Esophagus muscularis mucosa (tissue), 4 donors: ENCODE measurements at regions of chr1 and their contacts with region 1.

Region 1: GRCh38 chr1:51506537-51506936 is 12.5 kb downstream of the EPS15 start:
- DNase-seq: no peak
- H3K4me3 ChIP-seq: peak overlapping the region; percentile 2 to 41 (median 30)
- H3K27ac ChIP-seq: peak overlapping the region in 2 of 4 donors; percentile 15 to 18
- H3K4me1 ChIP-seq: peaks cover 21 to 59% (median 46%) of the 10 kb centered on the region in 4 donors
- H3K27me3 ChIP-seq: no peaks in the 10 kb centered on the region
- CTCF ChIP-seq: no peak
- EP300 ChIP-seq: no peak
- POLR2A ChIP-seq: no peak

Region 2: DNA sequence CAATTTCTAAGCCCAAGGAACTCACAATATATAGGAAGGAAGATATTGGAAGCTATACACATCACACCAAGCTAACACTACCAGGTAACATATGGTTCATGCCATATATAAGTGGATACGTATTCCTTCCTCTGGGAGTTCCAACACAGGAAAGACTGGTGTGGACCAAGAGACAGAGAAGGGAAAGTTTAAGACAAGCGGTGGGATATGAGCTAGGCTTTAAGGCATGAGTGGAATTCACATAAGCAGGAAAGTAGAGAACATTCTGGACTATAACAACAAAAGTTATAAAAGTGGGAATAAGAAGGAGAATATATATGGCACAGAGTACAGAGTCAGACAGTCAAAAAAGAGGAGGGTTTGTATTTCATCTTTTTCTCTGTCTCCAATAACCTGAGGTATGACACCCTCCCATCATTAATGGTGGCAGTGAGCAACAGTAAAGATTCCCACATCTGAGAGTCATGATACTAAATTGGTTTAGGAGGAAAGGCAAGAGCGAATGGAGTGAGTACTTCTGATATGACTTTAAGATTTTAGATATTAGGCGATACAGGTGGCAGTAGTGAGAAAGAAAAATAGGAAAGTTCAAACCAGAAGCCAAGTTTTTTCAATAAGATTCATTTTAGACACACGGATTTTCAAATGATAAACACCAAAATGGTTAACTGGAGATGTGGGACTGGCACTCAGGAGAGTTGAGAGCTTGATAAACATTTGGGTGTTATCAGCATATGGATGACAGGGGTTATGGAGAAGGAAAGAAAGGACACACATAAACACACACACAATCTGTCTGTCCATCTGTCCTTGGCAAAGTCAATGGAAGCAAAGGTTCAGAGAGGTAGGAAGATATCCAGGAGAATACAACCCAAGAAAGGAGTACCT is 88.8 kb before region 1 on chr1:
- intact Hi-C with region 1: loop called (anchors 5 kb)
- DNase-seq: no peak
- H3K4me3 ChIP-seq: no peak overlapping the region
- H3K27ac ChIP-seq: no peak overlapping the region
- H3K4me1 ChIP-seq: peaks cover 4 to 22% (median 13%) of the 10 kb centered on the region in 4 donors
- H3K27me3 ChIP-seq: no peaks in the 10 kb centered on the region
- CTCF ChIP-seq: no peak
- EP300 ChIP-seq: no peak
- POLR2A ChIP-seq: no peak